Left ventricle myocardium superior (tissue), 1 donor: ENCODE measurements at regions of chr15 and their contacts with region 1.

Region 1: GRCh38 chr15:82849556-82850512 is 40.4 kb downstream of the WHAMM start:
- DNase-seq: peak; percentile 87
- ATAC-seq: peak; percentile 97

Region 2: GRCh38 chr15:82999905-83000671 is 150.3 kb after region 1 on chr15:
- intact Hi-C with region 1: loop called (anchors 10 kb)
- DNase-seq: no peak
- ATAC-seq: peak; percentile 85

Region 3: GRCh38 chr15:83018436-83018835 is 168.6 kb after region 1 on chr15:
- intact Hi-C with region 1: no loop called
- DNase-seq: no peak
- ATAC-seq: no peak